ENCODE measurements at regions of chr5 and their contacts with region 1.

Region 1: DNA sequence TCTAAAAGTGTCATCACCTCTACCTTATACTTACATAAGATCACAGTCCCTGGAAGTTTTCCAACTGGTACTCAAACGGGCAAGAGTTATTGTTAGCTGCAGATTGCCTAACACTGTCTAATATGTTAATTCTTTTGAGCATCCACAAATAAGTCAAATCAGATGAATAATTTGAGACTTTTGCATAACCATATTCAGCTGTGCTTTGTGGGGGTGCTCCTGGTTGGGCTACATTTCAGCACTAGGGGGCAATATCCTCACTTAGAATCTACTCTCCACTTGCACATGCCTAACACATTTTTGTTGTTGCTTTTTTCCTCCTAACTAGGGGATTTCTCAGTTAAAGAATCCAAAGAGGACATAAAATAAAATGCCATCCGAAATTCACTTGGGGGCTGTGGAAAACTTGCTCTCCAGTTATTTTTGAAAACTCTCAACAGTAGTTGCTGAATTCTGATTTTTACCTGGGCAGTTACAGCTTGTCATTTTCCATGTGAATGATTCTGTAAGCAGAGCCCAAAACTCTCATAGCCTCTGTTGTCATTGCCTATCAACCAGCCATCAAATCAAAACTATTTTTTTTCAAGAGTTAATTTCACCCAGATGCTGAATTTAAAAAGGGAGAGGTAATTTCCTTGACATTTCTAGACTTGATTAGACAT is 71.5 kb downstream of the TRIM36 start:
- DNase-seq: peak; percentile 49
- ATAC-seq: peak; percentile 71
- H3K4me3 Mint-ChIP-seq: no peak overlapping the region
- H3K27ac Mint-ChIP-seq: no peak overlapping the region
- H3K4me1 Mint-ChIP-seq: no peaks in the 10 kb centered on the region
- H3K27me3 Mint-ChIP-seq: peaks cover 12% of the 10 kb centered on the region

Region 2: DNA sequence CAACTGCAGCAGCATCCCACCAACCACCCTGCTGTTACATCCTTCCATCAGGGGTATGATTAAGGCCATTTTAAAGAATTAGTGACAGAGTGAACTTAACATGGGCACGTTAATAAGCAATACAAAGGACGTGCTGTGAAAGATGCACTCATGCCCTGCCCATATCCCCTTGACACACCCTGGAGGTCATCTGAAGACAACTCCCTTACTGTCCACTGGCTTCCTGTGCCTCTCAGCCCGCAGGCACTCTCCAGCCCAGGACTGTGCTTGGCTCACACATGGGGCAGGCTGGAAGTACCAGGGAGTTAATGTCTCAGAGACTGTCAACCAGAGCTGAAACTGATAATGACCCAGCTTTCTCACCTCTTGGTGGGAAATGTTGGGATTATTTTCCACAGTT is 10.2 kb before region 1 on chr5:
- CTCF ChIA-PET with region 1: interaction called, 11 read pairs
- POLR2A ChIA-PET with region 1: no interaction called
- intact Hi-C with region 1: no loop called
- DNase-seq: no peak
- ATAC-seq: no peak
- H3K4me3 Mint-ChIP-seq: no peak overlapping the region
- H3K27ac Mint-ChIP-seq: no peak overlapping the region
- H3K4me1 Mint-ChIP-seq: no peaks in the 10 kb centered on the region
- H3K27me3 Mint-ChIP-seq: peaks cover 18% of the 10 kb centered on the region

Region 3: DNA sequence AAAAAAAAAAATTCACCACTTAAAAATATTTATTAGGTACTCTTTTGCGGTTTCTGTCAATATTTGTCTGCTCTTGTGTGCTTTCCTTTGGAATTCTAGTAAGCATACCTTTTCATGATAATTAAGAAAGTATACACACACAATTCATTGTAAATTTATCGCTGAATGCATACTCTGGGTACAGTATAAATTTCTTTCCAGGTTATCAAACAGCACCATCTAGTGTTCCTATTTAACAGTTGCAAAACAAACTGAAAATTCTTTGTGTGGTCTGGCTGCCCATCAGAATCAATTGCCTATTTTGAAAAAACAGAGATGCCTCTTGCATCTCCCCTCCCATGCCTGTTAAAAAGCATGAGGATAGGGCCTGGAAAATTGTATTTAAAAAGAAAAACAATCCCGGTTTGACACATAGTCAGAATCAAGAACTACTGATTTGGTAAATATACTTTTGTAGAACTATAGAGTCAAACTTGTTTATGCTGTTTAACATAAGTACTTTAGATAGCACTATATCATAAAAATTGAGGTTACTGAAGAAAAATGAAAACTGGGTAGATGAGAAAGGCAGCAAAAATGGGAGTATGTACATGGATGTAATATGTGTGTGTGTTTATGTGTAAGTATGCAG is 148.3 kb after region 1 on chr5:
- CTCF ChIA-PET with region 1: interaction called, 44 read pairs
- POLR2A ChIA-PET with region 1: no interaction called
- intact Hi-C with region 1: loop called (anchors 1 kb)
- DNase-seq: no peak
- ATAC-seq: no peak
- H3K4me3 Mint-ChIP-seq: no peak overlapping the region
- H3K27ac Mint-ChIP-seq: no peak overlapping the region
- H3K4me1 Mint-ChIP-seq: peaks cover 21% of the 10 kb centered on the region
- H3K27me3 Mint-ChIP-seq: no peaks in the 10 kb centered on the region

Region 4: DNA sequence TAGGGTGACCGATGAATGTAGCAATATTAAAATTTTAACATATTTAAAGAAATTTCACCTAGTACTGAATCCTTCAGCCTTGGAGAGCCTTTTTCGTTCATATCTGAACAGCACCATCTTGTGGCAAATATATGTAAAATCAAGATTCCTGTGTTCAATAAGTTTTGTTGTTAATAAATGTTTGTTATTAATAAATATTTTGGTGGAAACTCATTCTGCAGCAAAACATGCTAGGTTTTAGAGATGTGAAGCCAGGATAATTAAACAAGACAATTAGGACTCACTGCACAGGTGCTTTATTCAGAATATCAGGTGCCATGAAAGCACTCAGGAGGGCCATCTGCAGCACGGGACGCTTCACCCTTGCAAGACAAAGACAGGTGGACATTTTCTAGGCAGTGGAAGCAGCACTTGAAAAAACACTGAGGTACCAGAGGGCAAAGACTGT is 488.5 kb after region 1 on chr5:
- CTCF ChIA-PET with region 1: no interaction called
- POLR2A ChIA-PET with region 1: no interaction called
- intact Hi-C with region 1: loop called in 1 of 2 experiments (anchors 2 kb)
- DNase-seq: no peak
- ATAC-seq: no peak
- H3K4me3 Mint-ChIP-seq: no peak overlapping the region
- H3K27ac Mint-ChIP-seq: no peak overlapping the region
- H3K4me1 Mint-ChIP-seq: no peaks in the 10 kb centered on the region
- H3K27me3 Mint-ChIP-seq: no peaks in the 10 kb centered on the region